IMR-90 (cell line): ENCODE measurements at regions of chr12 and their contacts with region 1.

Region 1: GRCh38 chr12:8823565-8824300 is 1.3 kb downstream of the A2ML1 start:
- DNase-seq: peak; percentile 12
- ATAC-seq: peak; percentile 59; the same call in 1 of the 2 replicates
- H3K4me3 ChIP-seq: no peak overlapping the region
- H3K27ac ChIP-seq: no peak overlapping the region
- H3K4me1 ChIP-seq: no peaks in the 10 kb centered on the region
- H3K27me3 ChIP-seq: no peaks in the 10 kb centered on the region
- CTCF ChIP-seq: peak; percentile 48
- POLR2A ChIP-seq: no peak
- RAD21 ChIP-seq: peak; percentile 58

Region 2: GRCh38 chr12:8077207-8077606 is 746.5 kb before region 1 on chr12:
- CTCF ChIA-PET with region 1: no interaction called
- POLR2A ChIA-PET with region 1: no interaction called
- dilution Hi-C with region 1: no loop called
- in situ Hi-C with region 1: no loop called
- intact Hi-C with region 1: no loop called
- DNase-seq: peak; percentile 62
- ATAC-seq: no peak
- H3K4me3 ChIP-seq: no peak overlapping the region
- H3K27ac ChIP-seq: no peak overlapping the region
- H3K4me1 ChIP-seq: peaks cover 4% of the 10 kb centered on the region
- H3K27me3 ChIP-seq: no peaks in the 10 kb centered on the region
- CTCF ChIP-seq: no peak
- POLR2A ChIP-seq: no peak
- RAD21 ChIP-seq: no peak

Region 3: DNA sequence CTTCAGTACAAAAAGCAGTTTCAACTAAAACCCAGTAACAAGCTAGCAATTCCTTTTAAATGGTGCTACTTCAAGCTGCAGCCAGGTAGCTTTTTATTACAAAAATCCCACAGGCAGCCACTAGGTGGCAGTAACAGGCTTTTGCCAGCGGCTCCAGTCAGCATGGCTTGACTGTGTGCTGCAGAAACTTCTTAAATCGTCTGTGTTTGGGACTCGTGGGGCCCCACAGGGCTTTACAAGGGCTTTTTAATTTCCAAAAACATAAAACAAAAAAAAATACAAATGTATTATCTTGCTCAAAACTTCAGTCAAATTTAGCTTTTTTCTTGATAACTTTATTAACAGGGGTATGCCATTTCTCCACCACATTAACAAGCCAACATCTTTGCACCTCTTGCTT is 279.4 kb before region 1 on chr12:
- CTCF ChIA-PET with region 1: no interaction called
- POLR2A ChIA-PET with region 1: no interaction called
- dilution Hi-C with region 1: no loop called
- in situ Hi-C with region 1: no loop called
- intact Hi-C with region 1: loop called (anchors 5 kb)
- DNase-seq: peak; percentile 59
- ATAC-seq: peak; percentile 86
- H3K4me3 ChIP-seq: no peak overlapping the region
- H3K27ac ChIP-seq: no peak overlapping the region
- H3K4me1 ChIP-seq: no peaks in the 10 kb centered on the region
- H3K27me3 ChIP-seq: no peaks in the 10 kb centered on the region
- CTCF ChIP-seq: peak; percentile 81
- POLR2A ChIP-seq: no peak
- RAD21 ChIP-seq: peak; percentile 54

Region 4: GRCh38 chr12:8662593-8662992 is 161.1 kb before region 1 on chr12 and contains the start of gene MFAP5:
- CTCF ChIA-PET with region 1: no interaction called
- POLR2A ChIA-PET with region 1: no interaction called
- dilution Hi-C with region 1: no loop called
- in situ Hi-C with region 1: no loop called
- intact Hi-C with region 1: loop called (anchors 1 kb)
- DNase-seq: peak; percentile 25
- ATAC-seq: no peak
- H3K4me3 ChIP-seq: no peak within 1 kb of the TSS
- H3K27ac ChIP-seq: no peak within 1 kb of the TSS
- H3K4me1 ChIP-seq: no peaks in the 10 kb centered on the region
- H3K27me3 ChIP-seq: peaks cover 12% of the 10 kb centered on the region
- CTCF ChIP-seq: no peak
- POLR2A ChIP-seq: no peak
- RAD21 ChIP-seq: no peak
- total RNA-seq, gene MFAP5: 0.56 and 0.90 TPM in 2 replicates

Region 5: DNA sequence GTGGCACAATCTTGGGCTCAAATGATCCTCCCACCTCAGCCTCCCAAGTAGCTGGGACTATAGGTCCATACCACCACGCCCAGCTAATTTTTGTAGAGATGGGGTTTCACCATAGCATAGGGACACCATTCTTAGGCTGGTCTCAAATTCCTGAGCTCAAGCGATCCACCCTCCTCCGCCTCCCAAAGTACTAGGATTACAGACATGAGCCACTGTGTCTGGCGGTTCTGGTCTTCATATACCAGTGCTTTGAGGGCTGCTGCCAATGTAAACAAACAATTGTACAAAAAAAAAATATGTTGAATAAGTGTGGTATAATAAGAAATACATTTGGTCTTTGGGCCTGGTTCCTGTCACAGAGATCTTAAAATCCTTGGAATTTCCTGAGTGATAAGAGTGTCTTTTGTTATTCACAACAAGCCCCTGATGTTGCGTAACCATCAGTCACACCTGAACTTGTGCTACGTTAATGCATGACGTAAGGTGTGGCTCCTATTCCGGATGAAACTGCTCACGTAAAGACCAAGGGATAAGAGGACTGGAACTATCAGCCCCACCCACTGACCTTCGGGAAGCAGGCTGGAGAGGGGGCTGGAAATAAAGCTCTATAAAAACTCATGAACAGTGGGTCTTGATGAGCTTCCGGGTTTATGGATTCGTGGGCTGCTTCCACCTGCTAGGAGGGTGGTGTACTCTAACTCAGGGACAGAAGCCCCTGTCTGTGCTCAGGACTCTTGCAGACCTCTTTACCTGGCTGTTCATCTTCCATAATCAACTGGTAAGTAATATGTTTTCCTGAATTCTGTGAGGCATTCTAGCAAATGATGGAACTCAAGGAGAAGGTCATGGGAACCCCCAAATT is 142.5 kb before region 1 on chr12:
- CTCF ChIA-PET with region 1: interaction called, 5 read pairs
- POLR2A ChIA-PET with region 1: no interaction called
- dilution Hi-C with region 1: no loop called
- in situ Hi-C with region 1: no loop called
- intact Hi-C with region 1: loop called (anchors 1 kb)
- DNase-seq: peak; percentile 43
- ATAC-seq: peak; percentile 32; the same call in 1 of the 2 replicates
- H3K4me3 ChIP-seq: no peak overlapping the region
- H3K27ac ChIP-seq: no peak overlapping the region
- H3K4me1 ChIP-seq: no peaks in the 10 kb centered on the region
- H3K27me3 ChIP-seq: no peaks in the 10 kb centered on the region; the same call in 1 of the 2 replicates
- CTCF ChIP-seq: no peak
- POLR2A ChIP-seq: no peak
- RAD21 ChIP-seq: no peak

Region 6: DNA sequence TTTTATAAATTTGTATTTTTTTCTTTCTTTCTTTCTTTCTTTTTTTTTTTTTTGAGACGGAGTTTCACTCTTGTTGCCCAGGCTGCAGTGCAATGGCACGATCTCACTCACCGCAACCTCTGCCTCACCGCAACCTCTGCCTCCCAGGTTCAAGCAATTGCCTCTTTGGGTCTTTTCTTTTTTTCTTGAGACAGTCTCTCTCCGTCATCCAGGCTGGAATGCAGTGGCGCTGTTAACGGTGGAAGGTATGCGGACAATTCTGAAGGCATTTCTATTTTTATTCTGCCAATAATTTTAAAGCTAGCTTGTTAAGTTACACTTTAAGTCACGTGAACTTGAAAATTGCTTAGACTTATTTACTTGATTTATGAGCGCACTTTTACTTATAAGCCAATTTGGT is 81.8 kb after region 1 on chr12:
- CTCF ChIA-PET with region 1: no interaction called
- POLR2A ChIA-PET with region 1: no interaction called
- dilution Hi-C with region 1: no loop called
- in situ Hi-C with region 1: no loop called
- intact Hi-C with region 1: loop called (anchors 10 kb)
- DNase-seq: no peak
- ATAC-seq: no peak
- H3K4me3 ChIP-seq: no peak overlapping the region
- H3K27ac ChIP-seq: no peak overlapping the region
- H3K4me1 ChIP-seq: no peaks in the 10 kb centered on the region
- H3K27me3 ChIP-seq: peaks cover 2% of the 10 kb centered on the region
- CTCF ChIP-seq: no peak
- POLR2A ChIP-seq: no peak
- RAD21 ChIP-seq: no peak

Region 7: DNA sequence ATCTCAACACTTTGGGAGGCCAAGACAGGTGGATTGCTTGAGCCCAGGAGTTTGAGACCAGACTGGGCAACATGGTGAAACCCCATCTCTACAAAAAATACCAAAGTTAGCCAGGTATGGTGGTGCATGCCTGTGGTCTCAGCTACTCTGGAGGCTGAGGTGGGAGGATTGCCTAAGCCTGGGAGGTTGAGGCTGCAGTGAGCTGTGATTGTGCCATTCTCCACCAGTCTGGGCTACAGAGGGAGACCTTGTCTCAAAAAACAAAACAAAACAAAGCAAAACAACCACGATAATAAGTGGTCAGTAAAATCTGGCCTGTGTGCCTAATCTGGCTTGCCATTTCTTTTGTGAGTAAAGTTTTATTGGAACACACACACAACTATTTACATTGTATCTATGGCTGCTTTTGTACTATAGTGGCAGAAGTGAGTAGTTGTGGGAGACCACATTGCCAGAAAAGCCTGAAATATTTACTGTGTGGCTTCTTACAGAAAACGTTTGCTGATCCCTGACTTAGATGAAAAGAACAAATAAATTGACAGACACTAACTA is 146.2 kb after region 1 on chr12:
- CTCF ChIA-PET with region 1: no interaction called
- POLR2A ChIA-PET with region 1: no interaction called
- dilution Hi-C with region 1: no loop called
- in situ Hi-C with region 1: no loop called
- intact Hi-C with region 1: no loop called
- DNase-seq: no peak
- ATAC-seq: no peak
- H3K4me3 ChIP-seq: no peak overlapping the region
- H3K27ac ChIP-seq: no peak overlapping the region
- H3K4me1 ChIP-seq: no peaks in the 10 kb centered on the region
- H3K27me3 ChIP-seq: no peaks in the 10 kb centered on the region
- CTCF ChIP-seq: no peak
- POLR2A ChIP-seq: no peak
- RAD21 ChIP-seq: no peak